IMR-90 (cell line): ENCODE measurements at regions of chr1 and their contacts with region 1.

Region 1: DNA sequence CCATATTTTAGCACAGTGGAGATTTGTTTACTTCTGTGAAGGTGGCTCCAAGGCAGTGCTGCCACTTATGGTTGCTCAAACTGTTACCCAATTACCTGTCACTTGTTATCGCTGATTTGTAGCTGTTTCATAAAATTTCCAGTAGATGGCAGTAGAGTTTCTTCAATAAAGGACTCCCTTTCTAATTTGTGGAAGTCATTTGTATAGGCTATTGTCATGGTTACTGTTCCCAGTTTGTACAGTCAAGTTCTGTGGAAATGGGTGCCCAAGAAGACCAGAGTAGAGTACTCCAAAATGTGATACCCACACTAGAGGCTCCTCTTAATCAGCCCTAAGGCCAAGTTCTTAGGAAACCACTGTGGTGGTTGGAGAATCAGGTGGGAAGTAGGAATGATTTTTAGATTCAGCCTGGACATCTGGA is 186.1 kb downstream of the CLEC20A start:
- DNase-seq: peak; percentile 80
- ATAC-seq: peak; percentile 84
- H3K4me3 ChIP-seq: no peak overlapping the region
- H3K27ac ChIP-seq: no peak overlapping the region
- H3K4me1 ChIP-seq: peaks cover 2% of the 10 kb centered on the region; the same call in 1 of the 2 replicates
- H3K27me3 ChIP-seq: no peaks in the 10 kb centered on the region
- CTCF ChIP-seq: peak; percentile 80
- POLR2A ChIP-seq: no peak
- RAD21 ChIP-seq: peak; percentile 82

Region 2: DNA sequence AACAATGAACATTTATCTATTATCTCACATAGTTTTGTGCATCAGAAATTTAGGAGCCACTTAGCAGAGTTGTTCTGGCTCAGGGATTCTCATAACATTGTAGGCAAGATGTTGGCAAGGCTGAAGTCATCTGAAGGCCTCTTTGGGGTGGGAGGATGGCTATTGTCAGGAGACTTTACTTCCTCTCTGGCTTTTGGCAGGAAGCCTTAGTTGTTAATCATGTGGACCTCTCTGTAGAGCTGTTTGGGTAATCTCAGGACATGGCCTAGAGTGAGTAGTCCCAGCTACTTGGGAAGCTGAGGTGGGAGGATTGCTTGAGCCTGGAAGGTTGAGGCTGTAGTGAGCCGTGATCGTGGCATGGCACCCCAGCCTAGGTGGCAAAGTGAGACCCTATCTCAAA is 176.6 kb before region 1 on chr1:
- CTCF ChIA-PET with region 1: no interaction called
- POLR2A ChIA-PET with region 1: interaction called, 10 read pairs
- dilution Hi-C with region 1: no loop called
- in situ Hi-C with region 1: no loop called
- intact Hi-C with region 1: no loop called
- DNase-seq: peak; percentile 82
- ATAC-seq: peak; percentile 54
- H3K4me3 ChIP-seq: no peak overlapping the region
- H3K27ac ChIP-seq: no peak overlapping the region
- H3K4me1 ChIP-seq: peaks cover 2% of the 10 kb centered on the region; the same call in 1 of the 2 replicates
- H3K27me3 ChIP-seq: no peaks in the 10 kb centered on the region
- CTCF ChIP-seq: no peak
- POLR2A ChIP-seq: no peak
- RAD21 ChIP-seq: no peak

Region 3: GRCh38 chr1:178300352-178300699 is 10.4 kb before region 1 on chr1:
- CTCF ChIA-PET with region 1: interaction called, 11 read pairs
- POLR2A ChIA-PET with region 1: no interaction called
- dilution Hi-C with region 1: no loop called
- in situ Hi-C with region 1: no loop called
- intact Hi-C with region 1: no loop called
- DNase-seq: no peak
- ATAC-seq: no peak
- H3K4me3 ChIP-seq: no peak overlapping the region
- H3K27ac ChIP-seq: no peak overlapping the region
- H3K4me1 ChIP-seq: no peaks in the 10 kb centered on the region
- H3K27me3 ChIP-seq: no peaks in the 10 kb centered on the region
- CTCF ChIP-seq: no peak
- POLR2A ChIP-seq: no peak
- RAD21 ChIP-seq: no peak

Region 4: GRCh38 chr1:178388418-178389145 is 77.9 kb after region 1 on chr1:
- CTCF ChIA-PET with region 1: no interaction called
- POLR2A ChIA-PET with region 1: no interaction called
- dilution Hi-C with region 1: no loop called
- in situ Hi-C with region 1: no loop called
- intact Hi-C with region 1: no loop called
- DNase-seq: peak; percentile 70
- ATAC-seq: peak; percentile 85
- H3K4me3 ChIP-seq: 0 out of 2 replicates have a peak overlapping the region, but pooled peaks have one; percentile 2
- H3K27ac ChIP-seq: peak overlapping the region; percentile 15; the same call in 1 of the 2 replicates
- H3K4me1 ChIP-seq: peaks cover 5% of the 10 kb centered on the region
- H3K27me3 ChIP-seq: no peaks in the 10 kb centered on the region
- CTCF ChIP-seq: no peak
- POLR2A ChIP-seq: no peak
- RAD21 ChIP-seq: no peak

Region 5: DNA sequence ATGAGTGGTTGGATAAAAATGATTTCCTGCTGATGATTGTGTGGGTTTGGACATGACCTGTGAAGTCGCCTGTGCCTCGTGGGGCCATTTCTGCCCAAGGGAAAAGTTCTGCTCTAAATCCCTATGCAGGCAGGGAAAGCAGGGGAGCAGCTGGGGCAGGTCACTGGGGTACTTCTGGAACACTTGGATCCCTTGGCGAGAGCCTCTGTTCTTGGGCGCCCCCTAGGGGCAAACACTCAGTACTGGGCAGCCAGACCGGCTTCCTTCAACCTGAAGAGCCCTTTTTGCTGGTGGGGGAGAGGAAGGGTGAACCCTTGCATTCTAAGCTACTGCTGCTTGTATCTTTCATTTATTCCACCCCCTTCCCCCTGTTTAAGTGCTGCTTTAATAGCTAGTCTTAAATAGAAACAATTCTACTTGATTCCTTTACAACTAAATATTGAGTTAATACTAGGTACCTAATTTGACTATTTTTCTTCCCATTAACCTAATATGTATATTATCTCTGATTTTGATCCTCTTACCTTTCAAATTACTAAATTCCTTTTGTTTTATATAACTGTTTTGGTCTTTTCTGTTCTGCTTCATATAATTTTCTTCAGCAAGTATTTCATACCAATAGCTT is 191.1 kb after region 1 on chr1:
- CTCF ChIA-PET with region 1: interaction called, 14 read pairs
- POLR2A ChIA-PET with region 1: interaction called, 3 read pairs
- dilution Hi-C with region 1: no loop called
- in situ Hi-C with region 1: loop called (anchors 10 kb)
- intact Hi-C with region 1: loop called (anchors 5 kb)
- DNase-seq: peak; percentile 64
- ATAC-seq: peak; percentile 97
- H3K4me3 ChIP-seq: no peak overlapping the region
- H3K27ac ChIP-seq: no peak overlapping the region
- H3K4me1 ChIP-seq: no peaks in the 10 kb centered on the region
- H3K27me3 ChIP-seq: peaks cover 5% of the 10 kb centered on the region; the same call in 1 of the 2 replicates
- CTCF ChIP-seq: peak; percentile 87
- POLR2A ChIP-seq: no peak
- RAD21 ChIP-seq: peak; percentile 71

Region 6: GRCh38 chr1:178532392-178532791 is 221.7 kb after region 1 on chr1:
- CTCF ChIA-PET with region 1: interaction called, 6 read pairs
- POLR2A ChIA-PET with region 1: no interaction called
- dilution Hi-C with region 1: no loop called
- in situ Hi-C with region 1: no loop called
- intact Hi-C with region 1: loop called (anchors 5 kb)
- DNase-seq: peak; percentile 78
- ATAC-seq: peak; percentile 53
- H3K4me3 ChIP-seq: no peak overlapping the region
- H3K27ac ChIP-seq: no peak overlapping the region
- H3K4me1 ChIP-seq: peaks cover 19% of the 10 kb centered on the region
- H3K27me3 ChIP-seq: no peaks in the 10 kb centered on the region
- CTCF ChIP-seq: peak; percentile 92
- POLR2A ChIP-seq: no peak
- RAD21 ChIP-seq: peak; percentile 93

Region 7: GRCh38 chr1:179002552-179003345 is 692.1 kb after region 1 on chr1:
- CTCF ChIA-PET with region 1: interaction called, 3 read pairs
- POLR2A ChIA-PET with region 1: no interaction called
- dilution Hi-C with region 1: no loop called
- in situ Hi-C with region 1: loop called (anchors 10 kb)
- intact Hi-C with region 1: loop called (anchors 5 kb)
- DNase-seq: peak; percentile 52
- ATAC-seq: peak; percentile 97
- H3K4me3 ChIP-seq: no peak overlapping the region
- H3K27ac ChIP-seq: no peak overlapping the region
- H3K4me1 ChIP-seq: no peaks in the 10 kb centered on the region; the same call in 1 of the 2 replicates
- H3K27me3 ChIP-seq: no peaks in the 10 kb centered on the region
- CTCF ChIP-seq: peak; percentile 93
- POLR2A ChIP-seq: no peak; the same call in 1 of the 2 replicates
- RAD21 ChIP-seq: peak; percentile 95

Region 8: DNA sequence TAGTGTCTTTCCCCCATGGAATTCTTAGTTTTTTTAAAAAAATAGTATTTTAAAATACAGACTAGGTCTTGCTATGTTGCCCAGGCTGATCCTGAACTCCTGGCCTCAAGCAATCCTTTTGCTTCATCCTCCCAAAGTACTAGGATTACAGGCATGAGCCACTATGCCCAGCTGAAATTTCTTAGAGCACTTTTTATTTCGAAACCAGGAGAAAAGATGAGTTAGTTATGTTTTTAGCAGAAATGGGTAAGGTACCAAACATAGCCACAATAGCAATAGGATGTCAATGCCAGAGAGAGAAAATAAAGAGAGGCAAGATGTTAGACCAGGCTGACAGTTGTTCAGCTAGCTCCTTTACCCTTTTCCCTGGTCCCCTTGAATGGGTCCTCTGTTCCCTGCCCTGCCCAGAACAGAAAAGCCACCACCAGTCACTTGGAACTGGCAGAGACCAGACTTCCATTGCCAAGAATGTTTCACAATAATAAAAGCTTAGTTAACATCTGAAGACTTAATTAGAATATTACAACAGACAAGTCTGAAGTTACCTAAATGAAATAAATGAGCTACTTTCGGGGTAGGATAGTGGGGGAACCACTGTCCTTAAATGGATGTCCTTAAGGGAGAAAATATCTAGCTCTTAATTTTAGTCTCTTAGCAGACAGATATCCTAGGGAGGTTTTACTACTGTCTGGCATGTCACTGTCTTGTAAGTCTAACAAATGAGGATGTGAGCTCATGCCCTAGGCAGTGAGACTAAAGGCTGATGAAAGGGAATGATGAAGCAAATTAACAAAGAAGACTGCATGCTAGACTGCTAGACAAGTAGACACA is 864.5 kb after region 1 on chr1:
- CTCF ChIA-PET with region 1: no interaction called
- POLR2A ChIA-PET with region 1: interaction called, 13 read pairs
- dilution Hi-C with region 1: no loop called
- in situ Hi-C with region 1: no loop called
- intact Hi-C with region 1: no loop called
- DNase-seq: peak; percentile 55
- ATAC-seq: peak; percentile 22
- H3K4me3 ChIP-seq: no peak overlapping the region
- H3K27ac ChIP-seq: peak overlapping the region; percentile 47; the same call in 1 of the 2 replicates
- H3K4me1 ChIP-seq: peaks cover 16% of the 10 kb centered on the region
- H3K27me3 ChIP-seq: no peaks in the 10 kb centered on the region
- CTCF ChIP-seq: no peak
- POLR2A ChIP-seq: no peak
- RAD21 ChIP-seq: no peak